Psoas muscle (tissue), 8 donors: ENCODE measurements at regions of chrX and their contacts with region 1.

Region 1: GRCh38 chrX:136920001-136920400 is 39.5 kb upstream of the RBMX start:
- DNase-seq: no peak
- ATAC-seq: no peak
- H3K4me3 ChIP-seq: no peak overlapping the region
- H3K27ac ChIP-seq: no peak overlapping the region
- H3K4me1 ChIP-seq: no peaks in the 10 kb centered on the region
- H3K27me3 ChIP-seq: no peaks in the 10 kb centered on the region
- CTCF ChIP-seq: no peak

Region 2: DNA sequence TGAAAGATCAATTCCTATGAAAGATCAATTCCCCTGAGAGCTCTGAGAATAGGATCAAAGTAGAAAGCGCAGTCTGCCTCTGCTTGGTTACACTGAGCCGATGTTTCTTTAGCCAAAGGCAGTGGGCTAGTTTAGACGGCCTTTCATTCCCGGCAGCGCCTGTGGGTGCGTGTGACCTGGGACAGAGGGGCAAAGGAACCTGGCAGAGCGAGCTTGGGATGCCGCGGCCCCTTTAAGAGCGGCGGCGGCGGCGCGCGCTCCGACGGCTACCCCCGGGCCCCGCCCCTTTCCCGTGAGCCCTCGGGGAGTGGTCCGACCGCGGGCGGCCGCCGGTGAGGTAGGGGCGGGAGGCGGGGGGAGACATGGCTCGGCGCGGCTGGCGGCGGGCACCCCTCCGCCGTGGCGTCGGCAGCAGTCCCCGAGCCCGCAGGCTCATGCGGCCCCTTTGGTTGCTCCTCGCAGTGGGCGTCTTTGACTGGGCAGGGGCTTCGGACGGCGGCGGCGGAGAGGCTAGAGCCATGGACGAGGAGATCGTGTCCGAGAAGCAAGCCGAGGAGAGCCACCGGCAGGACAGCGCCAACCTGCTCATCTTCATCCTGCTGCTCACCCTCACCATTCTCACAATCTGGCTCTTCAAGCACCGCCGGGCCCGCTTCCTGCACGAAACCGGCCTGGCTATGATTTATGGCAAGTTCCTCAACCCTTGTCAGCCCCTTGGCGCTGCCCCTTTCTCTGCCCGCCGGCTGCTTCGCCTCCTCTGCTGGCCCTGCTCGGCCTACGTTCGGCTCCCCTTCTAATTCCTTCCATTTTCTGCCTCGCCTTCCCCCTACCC is 934.6 kb before region 1 on chrX and contains the start of gene SLC9A6:
- intact Hi-C with region 1: loop called in 1 of 2 experiments (anchors 10 kb)
- DNase-seq: peak; percentile 73 to 82
- ATAC-seq: peak; percentile 95 to 98 (median 97)
- H3K4me3 ChIP-seq: peak within 1 kb of the TSS; percentile 79
- H3K27ac ChIP-seq: peak within 1 kb of the TSS; percentile 84
- H3K4me1 ChIP-seq: peaks cover 5% of the 10 kb centered on the region
- H3K27me3 ChIP-seq: no peaks in the 10 kb centered on the region
- CTCF ChIP-seq: no peak
- total RNA-seq, gene SLC9A6: 8.8 to 11.8 (median 9.1) TPM

Region 3: DNA sequence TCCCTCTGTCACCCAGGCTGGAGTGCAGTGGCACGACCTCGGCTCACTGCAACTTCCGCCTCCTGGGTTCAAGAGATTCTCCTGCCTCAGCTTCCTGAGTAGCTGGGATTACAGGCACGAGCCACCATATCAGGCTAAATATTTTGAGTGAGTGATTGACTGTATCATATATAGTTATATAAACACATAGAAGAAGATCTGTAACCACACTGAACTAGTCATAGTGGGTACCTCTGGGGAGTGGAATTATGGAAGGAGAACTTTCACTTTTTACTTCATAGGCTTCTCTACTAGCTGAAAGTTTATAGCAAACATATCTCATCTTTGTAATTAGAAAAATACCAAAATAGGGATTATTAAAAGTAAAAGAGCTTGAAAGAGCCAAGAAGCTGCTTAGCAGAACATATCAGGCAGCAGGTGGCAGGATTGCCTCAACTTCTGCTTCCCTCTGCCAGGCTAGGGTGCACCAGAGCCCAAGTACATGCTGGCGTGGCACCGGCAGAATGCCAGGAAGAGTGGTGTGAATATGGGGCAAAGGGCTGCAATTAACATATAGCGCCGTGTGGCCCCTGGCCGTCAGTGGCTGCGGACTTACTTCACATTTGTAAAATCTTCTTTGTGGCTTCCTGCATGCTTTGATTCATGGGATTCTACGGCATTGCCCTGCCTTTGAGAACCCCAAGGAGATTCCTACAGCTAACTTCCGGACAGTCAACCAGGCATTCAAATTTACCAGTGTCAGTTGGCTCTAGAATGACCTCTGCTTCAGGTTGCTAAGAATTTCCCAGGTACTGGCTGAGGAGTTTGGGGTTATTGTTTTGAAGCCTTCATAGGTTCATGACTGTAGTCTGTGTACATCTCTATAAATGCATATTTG is 311.5 kb before region 1 on chrX:
- intact Hi-C with region 1: loop called in 1 of 2 experiments (anchors 5 kb)
- DNase-seq: peak; percentile 27 to 59
- ATAC-seq: peak in 3 of 4 donors; percentile 51 to 70 (median 59)
- H3K4me3 ChIP-seq: no peak overlapping the region
- H3K27ac ChIP-seq: no peak overlapping the region
- H3K4me1 ChIP-seq: no peaks in the 10 kb centered on the region
- H3K27me3 ChIP-seq: peaks cover 0 to 4% (median 0%) of the 10 kb centered on the region in 3 donors
- CTCF ChIP-seq: peak; percentile 40

Region 4: GRCh38 chrX:136711147-136711546 is 208.9 kb before region 1 on chrX:
- intact Hi-C with region 1: loop called (anchors 2 to 10 kb)
- DNase-seq: peak; percentile 34 to 67
- ATAC-seq: peak; percentile 71 to 90 (median 80)
- H3K4me3 ChIP-seq: no peak overlapping the region
- H3K27ac ChIP-seq: peak overlapping the region; percentile 32
- H3K4me1 ChIP-seq: peaks cover 7% of the 10 kb centered on the region
- H3K27me3 ChIP-seq: no peaks in the 10 kb centered on the region
- CTCF ChIP-seq: peak; percentile 48